ENCODE measurements at regions of chr3 and their contacts with region 1.

Region 1: DNA sequence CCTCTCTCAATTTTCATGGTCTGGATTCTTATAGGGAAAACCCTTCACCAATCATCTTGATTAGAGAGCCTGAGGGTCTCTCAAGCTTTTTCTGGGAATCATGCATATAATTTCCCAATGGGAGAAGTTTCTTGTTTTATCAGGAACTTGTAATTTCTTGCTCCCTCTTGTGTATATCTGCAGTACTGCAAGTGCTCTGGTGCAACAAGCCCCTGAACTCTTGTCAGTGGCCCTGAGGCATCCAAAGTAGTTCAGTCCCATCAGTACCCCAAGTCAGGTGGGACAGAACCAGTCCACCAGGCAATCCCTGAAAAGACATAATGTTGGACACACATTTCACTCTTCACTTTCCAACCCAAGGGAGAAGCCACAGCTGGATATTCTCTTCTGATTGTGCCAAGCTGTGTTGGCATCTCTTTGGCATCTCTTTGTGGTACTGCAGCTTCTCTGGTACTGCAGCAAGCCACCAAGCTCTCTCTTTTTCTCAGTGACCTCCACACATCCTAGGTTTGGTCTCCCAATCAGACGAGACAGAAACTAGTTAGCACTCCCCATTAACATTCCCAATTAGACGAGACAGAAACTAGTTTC is 214.5 kb downstream of the ZIC4 start:
- DNase-seq: peak; percentile 75
- ATAC-seq: peak; percentile 69
- H3K4me3 ChIP-seq: no peak overlapping the region
- H3K27ac ChIP-seq: no peak overlapping the region
- H3K4me1 ChIP-seq: no peaks in the 10 kb centered on the region
- H3K27me3 ChIP-seq: no peaks in the 10 kb centered on the region; the same call in 1 of the 2 replicates
- CTCF ChIP-seq: peak; percentile 66
- POLR2A ChIP-seq: no peak
- RAD21 ChIP-seq: peak; percentile 56

Region 2: DNA sequence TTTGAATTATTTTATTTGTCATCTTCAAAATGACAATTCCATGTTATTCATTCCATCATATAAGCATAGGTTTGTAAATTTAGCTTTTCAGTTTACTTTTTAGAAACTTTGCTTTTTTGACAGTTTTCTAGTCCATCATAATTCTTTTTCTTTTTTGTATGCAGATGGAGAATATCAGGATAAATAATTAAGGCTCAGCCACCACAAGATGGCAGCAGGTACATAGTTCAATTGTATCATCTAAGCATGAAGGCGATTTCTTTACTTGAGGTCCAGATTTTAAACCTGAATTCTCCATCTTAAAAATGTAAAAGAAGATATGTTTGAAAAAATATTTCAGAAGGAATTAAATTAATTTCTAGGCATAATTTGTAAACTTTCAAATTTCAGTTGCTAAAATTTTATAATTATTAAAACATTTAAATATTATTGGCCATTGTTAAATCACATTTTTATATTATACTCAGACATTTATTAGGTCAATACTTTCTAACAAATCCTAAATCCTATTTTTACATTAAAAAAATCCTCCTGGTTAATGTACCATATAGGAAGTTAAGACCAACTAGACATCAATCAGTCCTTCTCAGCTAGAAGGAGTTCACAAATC is 601.9 kb before region 1 on chr3:
- CTCF ChIA-PET with region 1: no interaction called
- POLR2A ChIA-PET with region 1: no interaction called
- dilution Hi-C with region 1: no loop called
- in situ Hi-C with region 1: no loop called
- intact Hi-C with region 1: loop called (anchors 2 kb)
- DNase-seq: peak; percentile 52
- ATAC-seq: peak; percentile 71
- H3K4me3 ChIP-seq: no peak overlapping the region
- H3K27ac ChIP-seq: no peak overlapping the region
- H3K4me1 ChIP-seq: no peaks in the 10 kb centered on the region
- H3K27me3 ChIP-seq: no peaks in the 10 kb centered on the region
- CTCF ChIP-seq: peak; percentile 66
- POLR2A ChIP-seq: no peak
- RAD21 ChIP-seq: peak; percentile 52; the same call in 1 of the 2 replicates

Region 3: GRCh38 chr3:146640955-146641867 is 550.7 kb before region 1 on chr3:
- CTCF ChIA-PET with region 1: no interaction called
- POLR2A ChIA-PET with region 1: no interaction called
- dilution Hi-C with region 1: no loop called
- in situ Hi-C with region 1: no loop called
- intact Hi-C with region 1: loop called (anchors 5 kb)
- DNase-seq: peak; percentile 37
- ATAC-seq: peak; percentile 86
- H3K4me3 ChIP-seq: no peak overlapping the region
- H3K27ac ChIP-seq: no peak overlapping the region
- H3K4me1 ChIP-seq: no peaks in the 10 kb centered on the region
- H3K27me3 ChIP-seq: no peaks in the 10 kb centered on the region
- CTCF ChIP-seq: peak; percentile 58
- POLR2A ChIP-seq: no peak
- RAD21 ChIP-seq: peak; percentile 65

Region 4: DNA sequence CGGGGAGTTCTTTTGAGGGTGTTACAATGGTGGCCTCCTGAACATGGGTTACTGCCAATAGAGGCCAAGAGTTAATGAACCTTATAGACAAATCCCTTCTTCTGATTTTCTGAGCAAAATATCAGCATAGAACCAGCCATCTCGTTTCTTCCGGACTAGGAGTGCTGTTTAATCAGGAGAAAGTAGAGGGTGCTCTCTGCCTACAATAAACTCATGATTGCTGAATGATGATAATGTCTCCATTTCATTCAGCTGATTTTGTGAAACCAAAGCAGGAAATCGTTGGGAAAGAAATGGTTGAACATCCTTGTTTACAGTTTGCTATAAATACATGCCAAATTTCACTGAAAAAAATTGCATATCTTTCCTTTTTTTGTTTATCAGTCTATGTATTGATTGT is 444.0 kb before region 1 on chr3:
- CTCF ChIA-PET with region 1: interaction called, 4 read pairs
- POLR2A ChIA-PET with region 1: no interaction called
- dilution Hi-C with region 1: no loop called
- in situ Hi-C with region 1: no loop called
- intact Hi-C with region 1: loop called (anchors 1 kb)
- DNase-seq: peak; percentile 33
- ATAC-seq: no peak
- H3K4me3 ChIP-seq: no peak overlapping the region
- H3K27ac ChIP-seq: no peak overlapping the region
- H3K4me1 ChIP-seq: no peaks in the 10 kb centered on the region
- H3K27me3 ChIP-seq: no peaks in the 10 kb centered on the region
- CTCF ChIP-seq: peak; percentile 39
- POLR2A ChIP-seq: no peak
- RAD21 ChIP-seq: peak; percentile 48

Region 5: GRCh38 chr3:146817704-146818103 is 374.2 kb before region 1 on chr3:
- CTCF ChIA-PET with region 1: interaction called, 7 read pairs
- POLR2A ChIA-PET with region 1: no interaction called
- dilution Hi-C with region 1: no loop called
- in situ Hi-C with region 1: no loop called
- intact Hi-C with region 1: loop called (anchors 10 kb)
- DNase-seq: peak; percentile 16
- ATAC-seq: no peak
- H3K4me3 ChIP-seq: no peak overlapping the region
- H3K27ac ChIP-seq: no peak overlapping the region
- H3K4me1 ChIP-seq: no peaks in the 10 kb centered on the region
- H3K27me3 ChIP-seq: no peaks in the 10 kb centered on the region
- CTCF ChIP-seq: peak; percentile 42
- POLR2A ChIP-seq: no peak
- RAD21 ChIP-seq: peak; percentile 52

Region 6: GRCh38 chr3:147049821-147050220 is 142.1 kb before region 1 on chr3:
- CTCF ChIA-PET with region 1: no interaction called
- POLR2A ChIA-PET with region 1: no interaction called
- dilution Hi-C with region 1: no loop called
- in situ Hi-C with region 1: no loop called
- intact Hi-C with region 1: no loop called
- DNase-seq: no peak
- ATAC-seq: no peak
- H3K4me3 ChIP-seq: no peak overlapping the region
- H3K27ac ChIP-seq: no peak overlapping the region
- H3K4me1 ChIP-seq: no peaks in the 10 kb centered on the region
- H3K27me3 ChIP-seq: no peaks in the 10 kb centered on the region
- CTCF ChIP-seq: no peak
- POLR2A ChIP-seq: no peak
- RAD21 ChIP-seq: no peak

Region 7: GRCh38 chr3:147099076-147099475 is 92.8 kb before region 1 on chr3:
- CTCF ChIA-PET with region 1: no interaction called
- POLR2A ChIA-PET with region 1: no interaction called
- dilution Hi-C with region 1: no loop called
- in situ Hi-C with region 1: no loop called
- intact Hi-C with region 1: no loop called
- DNase-seq: no peak
- ATAC-seq: no peak
- H3K4me3 ChIP-seq: no peak overlapping the region
- H3K27ac ChIP-seq: no peak overlapping the region
- H3K4me1 ChIP-seq: no peaks in the 10 kb centered on the region
- H3K27me3 ChIP-seq: no peaks in the 10 kb centered on the region
- CTCF ChIP-seq: no peak
- POLR2A ChIP-seq: no peak
- RAD21 ChIP-seq: no peak

Region 8: GRCh38 chr3:147119989-147120388 is 71.9 kb before region 1 on chr3:
- CTCF ChIA-PET with region 1: interaction called, 8 read pairs
- POLR2A ChIA-PET with region 1: no interaction called
- dilution Hi-C with region 1: no loop called
- in situ Hi-C with region 1: no loop called
- intact Hi-C with region 1: loop called (anchors 2 kb)
- DNase-seq: peak; percentile 45
- ATAC-seq: peak; percentile 66
- H3K4me3 ChIP-seq: no peak overlapping the region
- H3K27ac ChIP-seq: no peak overlapping the region
- H3K4me1 ChIP-seq: no peaks in the 10 kb centered on the region
- H3K27me3 ChIP-seq: no peaks in the 10 kb centered on the region
- CTCF ChIP-seq: peak; percentile 61
- POLR2A ChIP-seq: no peak
- RAD21 ChIP-seq: peak; percentile 61